ENCODE measurements at regions of chr10 and their contacts with region 1.

Region 1: GRCh38 chr10:96513698-96514561 is at the start of gene TLL2:
- DNase-seq: peak; percentile 81 to 93 (median 88)
- H3K4me3 ChIP-seq: peak within 1 kb of the TSS; percentile 39 to 83 (median 68)
- H3K27ac ChIP-seq: peak within 1 kb of the TSS in 26 of 59 donors; percentile 11 to 81 (median 48)
- H3K27me3 ChIP-seq: no peaks in the 10 kb centered on the region
- CTCF ChIP-seq: peak; percentile 65 to 96 (median 86)
- total RNA-seq, gene TLL2: 1.8 to 14.6 (median 4.2) TPM

Region 2: DNA sequence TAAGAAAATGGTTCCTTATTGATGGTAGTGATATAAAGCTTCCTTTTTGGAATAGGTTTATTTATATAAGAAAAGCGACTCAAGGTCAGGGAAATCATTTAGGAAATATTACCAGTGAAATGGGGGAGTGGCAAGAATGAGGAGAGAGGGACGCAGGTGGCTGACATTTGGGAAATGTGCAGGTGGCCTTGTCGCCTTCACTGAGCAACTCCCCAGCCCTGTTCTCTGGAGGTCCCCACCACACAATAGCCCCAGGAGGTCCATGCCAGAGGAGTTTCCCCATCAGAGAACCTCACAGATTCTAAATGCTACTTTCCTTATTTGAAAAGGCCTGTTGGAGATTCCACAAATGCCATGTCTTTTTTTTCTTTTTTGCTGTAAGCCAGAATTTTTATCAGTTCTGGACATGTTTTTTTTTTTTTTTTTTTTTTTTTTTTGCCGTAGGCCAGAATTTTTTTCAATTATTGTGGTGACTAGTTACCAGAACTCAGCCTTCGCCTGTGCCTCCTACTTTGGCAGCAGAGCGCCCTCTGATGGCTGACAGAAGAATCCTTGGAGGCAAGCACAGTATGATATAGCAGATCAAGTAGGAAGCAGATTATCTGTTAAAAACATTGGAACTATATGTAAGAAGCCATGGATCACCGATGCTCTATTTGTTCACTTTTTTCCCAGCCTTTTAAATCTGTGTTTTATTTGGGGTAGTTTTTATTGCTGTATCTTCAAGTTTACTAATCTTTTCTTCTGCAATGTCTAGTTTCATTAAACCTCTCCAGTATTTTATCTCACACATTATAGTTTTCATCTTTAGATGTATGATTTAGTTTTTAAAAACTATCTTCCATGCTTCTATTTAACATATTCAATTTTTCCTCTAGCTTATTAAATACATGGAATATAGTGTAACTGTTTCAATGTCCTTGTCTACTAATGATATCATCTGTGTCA is 173.7 kb before region 1 on chr10:
- intact Hi-C with region 1: loop called (anchors 5 kb)
- DNase-seq: peak; percentile 28 to 85 (median 73)
- H3K4me3 ChIP-seq: no peak overlapping the region
- H3K27ac ChIP-seq: peak overlapping the region in 52 of 59 donors; percentile 7 to 96 (median 84)
- H3K27me3 ChIP-seq: peaks cover 0 to 3% (median 0%) of the 10 kb centered on the region in 45 donors
- CTCF ChIP-seq: peak; percentile 32 to 81 (median 68)

Region 3: GRCh38 chr10:96470116-96470743 is 43.7 kb before region 1 on chr10:
- intact Hi-C with region 1: loop called in 1 of 2 experiments (anchors 1 kb)
- DNase-seq: peak in 9 of 10 donors; percentile 36 to 74 (median 60)
- H3K4me3 ChIP-seq: no peak overlapping the region
- H3K27ac ChIP-seq: peak overlapping the region in 31 of 59 donors; percentile 3 to 77 (median 48)
- H3K27me3 ChIP-seq: peaks cover 0 to 14% (median 0%) of the 10 kb centered on the region in 45 donors
- CTCF ChIP-seq: peak; percentile 29 to 81 (median 64)

Region 4: GRCh38 chr10:96556003-96556402 is 42.1 kb after region 1 on chr10:
- intact Hi-C with region 1: loop called in 1 of 2 experiments (anchors 5 kb)
- DNase-seq: peak in 1 of 10 donors; percentile 18
- H3K4me3 ChIP-seq: no peak overlapping the region
- H3K27ac ChIP-seq: no peak overlapping the region
- H3K27me3 ChIP-seq: no peaks in the 10 kb centered on the region
- CTCF ChIP-seq: peak; percentile 15 to 84 (median 58)

Region 5: DNA sequence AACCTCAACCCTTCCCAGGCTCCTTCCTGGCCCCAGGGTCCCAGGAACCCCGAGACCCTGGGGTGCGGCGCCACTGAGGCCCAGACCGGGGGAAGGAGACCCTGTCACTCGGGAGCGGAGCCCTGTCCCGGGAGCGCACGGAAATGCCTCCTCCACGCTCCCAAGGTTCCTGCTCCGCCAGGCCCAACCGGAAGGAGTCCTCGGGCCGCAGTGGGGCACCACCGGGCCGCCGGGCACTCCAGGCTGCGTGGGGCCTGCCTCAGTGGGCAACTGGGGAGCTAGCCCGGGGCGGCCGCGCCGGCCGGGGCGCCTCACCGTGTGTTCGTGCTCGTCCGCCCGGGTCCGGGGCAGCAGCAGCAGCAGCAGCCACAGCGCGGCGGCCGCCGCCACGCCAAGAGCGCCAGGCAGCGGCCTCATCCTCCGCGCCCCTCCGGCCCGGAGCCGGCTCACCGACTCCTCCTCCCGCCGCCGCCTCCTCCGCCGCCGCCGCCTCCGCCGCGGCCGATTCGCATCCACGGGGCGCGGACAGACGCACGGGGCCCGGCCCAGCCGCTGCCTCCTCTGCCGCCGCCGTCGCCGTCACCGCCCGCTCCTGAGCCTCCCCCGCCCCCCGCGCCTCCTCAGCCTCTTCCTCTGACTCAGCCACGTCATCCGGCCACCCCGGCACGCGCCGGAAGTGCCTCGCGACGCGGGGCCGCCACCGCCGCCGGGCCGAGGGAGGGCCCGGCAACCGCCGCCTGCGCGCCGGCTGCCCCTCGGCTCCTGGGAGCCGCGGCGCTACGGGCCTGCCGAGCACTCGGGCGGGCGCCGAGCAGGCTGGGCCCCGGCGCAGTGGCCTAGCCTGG is 72.7 kb after region 1 on chr10 and contains the start of gene TM9SF3:
- intact Hi-C with region 1: loop called in 1 of 2 experiments (anchors 10 kb)
- DNase-seq: peak; percentile 78 to 94 (median 88)
- H3K4me3 ChIP-seq: peak within 1 kb of the TSS; percentile 62 to 99 (median 92)
- H3K27ac ChIP-seq: peak within 1 kb of the TSS; percentile 55 to 98 (median 94)
- H3K27me3 ChIP-seq: no peaks in the 10 kb centered on the region
- CTCF ChIP-seq: peak in 12 of 56 donors; percentile 4 to 26 (median 12)
- total RNA-seq, gene TM9SF3: 52.7 to 101 (median 73.9) TPM